Colonic mucosa (tissue), 4 donors: ENCODE measurements at regions of chr1 and their contacts with region 1.

Region 1: GRCh38 chr1:183281553-183282091 is 95.6 kb downstream of the LAMC2 start:
- DNase-seq: peak; percentile 87
- H3K4me3 ChIP-seq: no peak overlapping the region
- H3K27ac ChIP-seq: peak overlapping the region; percentile 27
- H3K4me1 ChIP-seq: no peaks in the 10 kb centered on the region
- H3K27me3 ChIP-seq: no peaks in the 10 kb centered on the region
- CTCF ChIP-seq: peak; percentile 89

Region 2: GRCh38 chr1:182962554-182963115 is 319.0 kb before region 1 on chr1:
- intact Hi-C with region 1: loop called (anchors 2 kb)
- DNase-seq: peak; percentile 52
- H3K4me3 ChIP-seq: no peak overlapping the region
- H3K27ac ChIP-seq: no peak overlapping the region
- H3K4me1 ChIP-seq: no peaks in the 10 kb centered on the region
- H3K27me3 ChIP-seq: no peaks in the 10 kb centered on the region
- CTCF ChIP-seq: peak; percentile 72

Region 3: GRCh38 chr1:183080406-183080805 is 201.2 kb before region 1 on chr1:
- intact Hi-C with region 1: no loop called
- DNase-seq: no peak
- H3K4me3 ChIP-seq: no peak overlapping the region
- H3K27ac ChIP-seq: no peak overlapping the region
- H3K4me1 ChIP-seq: no peaks in the 10 kb centered on the region
- H3K27me3 ChIP-seq: no peaks in the 10 kb centered on the region
- CTCF ChIP-seq: no peak

Region 4: DNA sequence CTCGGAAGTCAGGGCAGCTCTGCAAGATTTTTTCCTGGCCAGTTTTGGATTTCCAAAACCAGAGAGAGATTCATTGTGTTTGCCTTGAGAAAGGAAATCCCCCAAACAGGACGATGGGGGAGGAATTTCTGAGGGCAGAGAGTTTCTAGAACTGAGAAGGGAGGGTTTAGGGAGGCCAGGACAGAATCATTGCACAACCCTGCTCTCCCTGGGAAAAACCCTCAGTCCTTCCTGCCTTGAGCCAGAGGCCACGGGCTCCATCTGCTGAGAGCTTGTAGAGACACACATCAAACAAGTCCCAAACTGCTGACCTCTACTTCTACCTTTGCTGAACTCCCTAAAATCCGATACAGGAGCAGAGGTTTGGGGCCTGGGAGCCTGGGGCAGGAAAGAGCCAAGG is 36.8 kb after region 1 on chr1:
- intact Hi-C with region 1: loop called (anchors 5 kb)
- DNase-seq: peak; percentile 47
- H3K4me3 ChIP-seq: no peak overlapping the region
- H3K27ac ChIP-seq: no peak overlapping the region
- H3K4me1 ChIP-seq: no peaks in the 10 kb centered on the region
- H3K27me3 ChIP-seq: no peaks in the 10 kb centered on the region
- CTCF ChIP-seq: no peak

Region 5: DNA sequence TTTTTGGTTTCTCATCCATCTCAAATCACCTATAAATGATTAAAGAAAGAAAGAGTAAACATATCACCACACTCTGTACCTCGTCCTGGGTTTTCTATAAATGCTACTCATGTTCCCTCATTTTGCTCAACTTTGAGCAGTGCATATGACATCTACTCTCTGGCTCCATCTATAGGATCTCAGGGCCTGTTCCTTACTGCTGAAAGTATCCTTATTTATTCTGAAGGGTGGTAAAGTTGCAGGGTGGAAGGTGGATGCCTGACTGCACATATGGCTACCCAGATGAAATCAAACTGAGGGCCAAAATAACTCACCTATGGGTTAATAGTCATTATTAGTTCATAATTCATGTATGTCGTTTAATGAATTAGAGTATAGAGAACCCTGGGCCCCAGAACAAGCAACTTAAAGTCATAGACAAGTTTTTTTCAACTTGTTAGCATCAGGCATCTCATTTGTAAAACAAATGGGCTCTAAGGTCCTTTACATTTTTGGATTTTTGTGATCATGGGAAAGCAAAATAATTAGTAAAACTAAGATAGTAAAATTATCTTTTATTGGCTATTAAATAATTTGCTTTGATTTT is 262.1 kb after region 1 on chr1:
- intact Hi-C with region 1: loop called (anchors 5 kb)
- DNase-seq: peak; percentile 27
- H3K4me3 ChIP-seq: no peak overlapping the region
- H3K27ac ChIP-seq: no peak overlapping the region
- H3K4me1 ChIP-seq: no peaks in the 10 kb centered on the region
- H3K27me3 ChIP-seq: no peaks in the 10 kb centered on the region
- CTCF ChIP-seq: peak; percentile 52

Region 6: DNA sequence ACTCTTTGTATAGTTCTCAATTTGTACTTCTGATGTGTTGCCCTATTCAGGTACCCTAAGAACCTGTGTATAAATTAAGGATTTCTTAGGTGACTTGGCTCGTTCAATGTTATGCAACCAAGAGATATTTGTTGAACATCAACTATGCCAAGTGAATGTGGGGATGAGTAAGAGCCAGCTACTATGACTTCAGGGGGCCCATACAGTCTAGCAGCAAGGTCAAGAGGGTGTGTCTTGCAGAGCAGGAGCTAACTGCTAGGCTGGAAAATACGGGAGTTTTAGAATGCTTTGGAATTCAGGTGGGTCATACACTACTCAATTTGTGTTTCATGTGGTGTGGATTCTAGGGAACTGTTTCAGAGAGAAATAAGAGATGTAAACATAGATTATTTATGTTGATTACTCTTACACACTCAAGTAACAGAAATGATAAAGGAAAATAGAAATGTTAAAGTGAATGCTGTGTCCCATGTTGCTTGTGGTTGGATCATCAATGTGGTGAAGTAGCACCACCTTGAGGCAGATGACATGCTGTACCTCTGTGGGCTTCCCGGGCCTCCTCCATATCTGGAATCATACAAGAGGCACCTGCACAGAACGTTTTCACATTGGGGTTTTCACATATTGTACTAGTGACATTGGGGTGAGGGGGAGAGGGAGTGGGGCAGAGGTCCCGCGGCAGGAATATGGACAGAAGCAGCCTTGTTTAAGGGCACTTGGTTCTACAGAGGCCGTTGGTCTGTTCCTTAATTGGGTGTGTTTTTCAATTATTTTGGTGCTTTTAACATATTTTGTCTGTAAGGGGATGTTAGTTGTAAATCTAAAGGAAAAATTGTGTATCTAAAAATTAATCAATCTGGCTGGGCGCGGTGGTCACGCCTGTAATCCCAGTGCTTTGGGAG is 341.5 kb after region 1 on chr1:
- intact Hi-C with region 1: loop called (anchors 5 kb)
- DNase-seq: peak; percentile 62
- H3K4me3 ChIP-seq: no peak overlapping the region
- H3K27ac ChIP-seq: no peak overlapping the region
- H3K4me1 ChIP-seq: no peaks in the 10 kb centered on the region
- H3K27me3 ChIP-seq: no peaks in the 10 kb centered on the region
- CTCF ChIP-seq: peak; percentile 69